H1 (cell line): ENCODE measurements at regions of chr3 and their contacts with region 1.

Region 1: GRCh38 chr3:124078953-124079911 is 87.3 kb upstream of the ROPN1 start:
- DNase-seq: no peak
- H3K4me3 ChIP-seq: no peak overlapping the region
- H3K27ac ChIP-seq: no peak overlapping the region
- H3K4me1 ChIP-seq: no peaks in the 10 kb centered on the region
- H3K27me3 ChIP-seq: no peaks in the 10 kb centered on the region
- CTCF ChIP-seq: peak in 2 of 3 experiments; percentile 59 to 77; a peak in 3 of 4 replicates
- EP300 ChIP-seq: no peak
- POLR2A ChIP-seq: no peak
- RAD21 ChIP-seq: peak; percentile 77 to 80

Region 2: GRCh38 chr3:124014366-124014942 is 64.8 kb before region 1 on chr3:
- CTCF ChIA-PET with region 1: interaction called, 112 read pairs
- POLR2A ChIA-PET with region 1: no interaction called
- DNase-seq: no peak
- H3K4me3 ChIP-seq: no peak overlapping the region
- H3K27ac ChIP-seq: no peak overlapping the region
- H3K4me1 ChIP-seq: no peaks in the 10 kb centered on the region
- H3K27me3 ChIP-seq: no peaks in the 10 kb centered on the region
- CTCF ChIP-seq: no peak
- EP300 ChIP-seq: no peak
- POLR2A ChIP-seq: no peak
- RAD21 ChIP-seq: no peak

Region 3: DNA sequence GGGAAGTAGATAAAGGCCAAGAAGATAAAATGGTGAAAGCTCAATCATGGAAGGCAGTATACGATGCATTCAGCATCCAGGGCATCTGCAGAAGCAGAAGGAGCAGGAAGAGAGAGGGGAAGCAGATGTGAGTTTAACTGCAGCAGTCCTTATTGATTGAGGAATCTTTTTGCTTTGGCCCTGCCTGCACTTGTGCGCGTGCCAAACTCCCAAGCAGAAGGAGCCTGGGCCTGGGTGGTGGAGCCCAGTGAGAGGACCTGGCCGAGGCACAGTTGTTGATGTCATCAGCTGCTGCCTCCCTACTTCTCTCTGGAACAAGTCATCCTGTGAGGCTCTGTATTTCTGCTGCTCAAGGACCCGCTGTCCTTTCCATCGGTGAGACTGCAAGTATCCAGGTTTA is 21.8 kb before region 1 on chr3:
- CTCF ChIA-PET with region 1: interaction called, 15 read pairs
- POLR2A ChIA-PET with region 1: no interaction called
- DNase-seq: no peak
- H3K4me3 ChIP-seq: no peak overlapping the region
- H3K27ac ChIP-seq: no peak overlapping the region
- H3K4me1 ChIP-seq: no peaks in the 10 kb centered on the region; a peak in 2 of 7 replicates
- H3K27me3 ChIP-seq: peaks cover 0 to 4% (median under 1%) of the 10 kb centered on the region in 4 experiments; a peak in 2 of 7 replicates
- CTCF ChIP-seq: no peak
- EP300 ChIP-seq: no peak
- POLR2A ChIP-seq: no peak
- RAD21 ChIP-seq: no peak

Region 4: GRCh38 chr3:124097362-124098131 is 18.3 kb after region 1 on chr3:
- CTCF ChIA-PET with region 1: interaction called, 23 read pairs
- POLR2A ChIA-PET with region 1: no interaction called
- DNase-seq: no peak
- H3K4me3 ChIP-seq: no peak overlapping the region
- H3K27ac ChIP-seq: no peak overlapping the region
- H3K4me1 ChIP-seq: no peaks in the 10 kb centered on the region; a peak in 1 of 7 replicates
- H3K27me3 ChIP-seq: no peaks in the 10 kb centered on the region
- CTCF ChIP-seq: no peak
- EP300 ChIP-seq: no peak
- POLR2A ChIP-seq: no peak
- RAD21 ChIP-seq: no peak

Region 5: DNA sequence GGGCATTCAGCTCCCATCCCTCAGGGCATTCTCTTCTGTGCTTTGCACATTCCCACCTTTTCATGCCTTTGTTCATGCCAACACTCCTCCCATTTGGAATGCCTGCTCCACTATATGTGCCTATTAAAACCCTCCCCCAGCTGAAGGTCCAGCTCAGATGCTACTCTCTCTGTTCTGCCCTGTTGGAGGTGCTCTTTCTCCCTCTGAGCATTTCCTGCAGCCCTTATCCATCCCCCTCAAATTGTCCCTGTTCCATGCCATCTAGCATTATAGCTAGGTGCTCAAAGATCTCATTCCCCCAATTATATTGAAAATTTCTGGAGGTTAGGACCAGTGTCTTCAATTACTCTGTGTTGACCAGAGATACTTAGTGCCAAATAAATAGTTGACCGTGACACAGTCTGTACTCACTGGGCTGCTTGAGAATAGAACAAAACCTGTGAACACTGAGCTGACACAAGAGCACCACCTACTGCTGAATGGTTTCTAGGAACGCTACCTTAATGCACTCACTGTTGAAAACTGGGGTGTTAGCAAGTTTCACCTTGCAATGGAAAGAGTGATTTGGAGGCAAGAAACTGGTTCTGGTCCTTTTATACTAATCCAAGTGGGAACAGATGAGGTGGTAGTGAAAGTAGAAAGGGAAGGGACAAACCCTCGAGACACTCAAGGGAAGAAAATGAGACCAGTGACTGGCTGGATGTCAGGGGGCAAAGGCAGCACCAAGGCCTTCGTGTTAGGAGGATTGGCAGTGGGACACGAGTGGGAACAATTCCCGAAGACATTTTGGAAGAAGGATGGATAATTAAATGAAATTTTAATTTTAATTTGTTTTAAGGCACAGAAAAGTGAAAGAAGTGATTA is 202.5 kb after region 1 on chr3:
- CTCF ChIA-PET with region 1: interaction called, 52 read pairs
- POLR2A ChIA-PET with region 1: no interaction called
- DNase-seq: no peak
- H3K4me3 ChIP-seq: no peak overlapping the region
- H3K27ac ChIP-seq: no peak overlapping the region
- H3K4me1 ChIP-seq: 0 out of 7 replicates have a peak, but pooled peaks cover 0 to 3% (median 0%) of the 10 kb centered on the region in 4 experiments
- H3K27me3 ChIP-seq: no peaks in the 10 kb centered on the region; a peak in 1 of 7 replicates
- CTCF ChIP-seq: peak in 2 of 3 experiments; percentile 73 to 85; a peak in 3 of 4 replicates
- EP300 ChIP-seq: no peak
- POLR2A ChIP-seq: no peak
- RAD21 ChIP-seq: peak; percentile 88 to 92